HCT116 (cell line): ENCODE measurements at regions of chr7 and their contacts with region 1.

Region 1: GRCh38 chr7:36659172-36659516 is 65.2 kb downstream of the AOAH start:
- DNase-seq: no peak
- ATAC-seq: no peak
- H3K4me3 ChIP-seq: no peak overlapping the region; a peak in 1 of 4 replicates
- H3K27ac ChIP-seq: peak overlapping the region; percentile 45; the same call in 1 of the 2 replicates
- H3K4me1 ChIP-seq: peaks cover 34 to 49% of the 10 kb centered on the region in 2 experiments
- H3K27me3 ChIP-seq: no peaks in the 10 kb centered on the region
- CTCF ChIP-seq: no peak
- POLR2A ChIP-seq: no peak
- RAD21 ChIP-seq: no peak

Region 2: GRCh38 chr7:36547416-36547815 is 111.7 kb before region 1 on chr7:
- CTCF ChIA-PET with region 1: no interaction called
- POLR2A ChIA-PET with region 1: no interaction called
- RAD21 ChIA-PET with region 1: no interaction called
- intact Hi-C with region 1: no loop called
- DNase-seq: no peak
- ATAC-seq: no peak
- H3K4me3 ChIP-seq: no peak overlapping the region
- H3K27ac ChIP-seq: no peak overlapping the region
- H3K4me1 ChIP-seq: no peaks in the 10 kb centered on the region
- H3K27me3 ChIP-seq: peaks cover 3% of the 10 kb centered on the region; the same call in 1 of the 2 replicates
- CTCF ChIP-seq: no peak
- POLR2A ChIP-seq: no peak
- RAD21 ChIP-seq: no peak

Region 3: GRCh38 chr7:36670585-36671431 is 11.7 kb after region 1 on chr7:
- CTCF ChIA-PET with region 1: interaction called, 19 read pairs
- POLR2A ChIA-PET with region 1: interaction called, 5 read pairs
- RAD21 ChIA-PET with region 1: no interaction called
- intact Hi-C with region 1: no loop called
- DNase-seq: peak; percentile 60
- ATAC-seq: peak; percentile 92
- H3K4me3 ChIP-seq: no peak overlapping the region
- H3K27ac ChIP-seq: no peak overlapping the region
- H3K4me1 ChIP-seq: peaks cover 5 to 21% of the 10 kb centered on the region in 2 experiments
- H3K27me3 ChIP-seq: no peaks in the 10 kb centered on the region
- CTCF ChIP-seq: peak; percentile 75 to 96 (median 91)
- POLR2A ChIP-seq: no peak
- RAD21 ChIP-seq: peak; percentile 84

Region 4: DNA sequence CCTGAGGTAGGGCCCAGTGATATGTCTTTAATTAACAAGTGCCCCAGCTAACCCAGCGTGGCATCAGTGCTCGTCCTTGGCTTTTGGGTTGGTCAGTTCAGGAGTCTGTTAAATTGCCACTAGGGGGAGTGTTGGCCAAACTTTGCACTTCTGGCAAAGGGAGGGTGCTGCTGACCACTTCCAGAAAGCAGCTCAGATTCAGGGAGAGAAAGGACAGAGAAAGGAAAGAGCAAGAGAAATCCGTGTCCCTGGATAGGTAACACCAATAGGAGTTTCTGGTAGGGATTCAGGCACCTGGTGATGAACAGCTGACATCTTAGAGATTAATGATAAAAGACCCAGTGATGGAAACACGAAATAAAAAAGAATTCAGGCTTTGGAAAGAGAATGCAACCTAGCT is 308.2 kb after region 1 on chr7:
- CTCF ChIA-PET with region 1: interaction called, 3 read pairs
- POLR2A ChIA-PET with region 1: no interaction called
- RAD21 ChIA-PET with region 1: no interaction called
- intact Hi-C with region 1: loop called (anchors 10 kb)
- DNase-seq: peak; percentile 78
- ATAC-seq: peak; percentile 98
- H3K4me3 ChIP-seq: no peak overlapping the region
- H3K27ac ChIP-seq: no peak overlapping the region
- H3K4me1 ChIP-seq: peaks cover 0 to 6% of the 10 kb centered on the region in 2 experiments; a peak in 1 of 4 replicates
- H3K27me3 ChIP-seq: no peaks in the 10 kb centered on the region
- CTCF ChIP-seq: peak; percentile 72 to 86 (median 74); a peak in 5 of 6 replicates
- POLR2A ChIP-seq: no peak
- RAD21 ChIP-seq: peak; percentile 82

Region 5: GRCh38 chr7:37193087-37193774 is 534.1 kb after region 1 on chr7:
- CTCF ChIA-PET with region 1: no interaction called
- POLR2A ChIA-PET with region 1: no interaction called
- RAD21 ChIA-PET with region 1: no interaction called
- intact Hi-C with region 1: loop called (anchors 5 kb)
- DNase-seq: no peak
- ATAC-seq: no peak
- H3K4me3 ChIP-seq: no peak overlapping the region
- H3K27ac ChIP-seq: no peak overlapping the region
- H3K4me1 ChIP-seq: no peaks in the 10 kb centered on the region
- H3K27me3 ChIP-seq: no peaks in the 10 kb centered on the region
- CTCF ChIP-seq: no peak
- POLR2A ChIP-seq: no peak
- RAD21 ChIP-seq: no peak